Activated naive CD4-positive, alpha-beta T cell treated with anti-CD3 and anti-CD28 coated beads, Interleukin-2, amount 10 ng/mL, durations not matched to agents 7 days and 5 days (primary cell): ENCODE measurements at regions of chr18 and their contacts with region 1.

Region 1: GRCh38 chr18:46173393-46174341 is 69.5 kb downstream of the HAUS1 start:
- DNase-seq: peak; percentile 96
- H3K4me3 Mint-ChIP-seq: peak overlapping the region; percentile 99
- H3K27ac Mint-ChIP-seq: peak overlapping the region; percentile 100
- H3K4me1 Mint-ChIP-seq: peaks cover 71% of the 10 kb centered on the region
- H3K27me3 Mint-ChIP-seq: peaks cover 8% of the 10 kb centered on the region

Region 2: DNA sequence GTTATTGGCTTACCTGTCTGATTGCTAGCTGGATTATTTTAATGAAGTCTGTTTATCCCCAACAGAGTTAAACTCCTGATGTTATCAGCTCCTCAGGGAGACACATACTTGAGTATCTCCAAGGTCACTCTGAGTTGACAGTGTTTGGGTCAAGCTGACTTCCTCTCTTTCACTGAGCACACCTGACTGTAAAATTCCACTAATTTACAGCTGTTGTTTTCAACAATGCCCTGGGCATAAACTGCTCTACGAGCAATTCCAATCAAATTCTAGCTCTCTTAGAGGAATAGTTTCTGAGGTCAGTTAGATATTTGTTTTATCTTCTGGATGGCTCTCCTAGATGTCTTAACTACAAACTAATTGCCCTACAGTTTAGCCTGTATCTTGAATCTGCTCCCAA is 59.9 kb before region 1 on chr18:
- CTCF ChIA-PET with region 1: no interaction called
- DNase-seq: no peak
- H3K4me3 Mint-ChIP-seq: no peak overlapping the region
- H3K27ac Mint-ChIP-seq: no peak overlapping the region
- H3K4me1 Mint-ChIP-seq: peaks cover 10% of the 10 kb centered on the region
- H3K27me3 Mint-ChIP-seq: no peaks in the 10 kb centered on the region

Region 3: DNA sequence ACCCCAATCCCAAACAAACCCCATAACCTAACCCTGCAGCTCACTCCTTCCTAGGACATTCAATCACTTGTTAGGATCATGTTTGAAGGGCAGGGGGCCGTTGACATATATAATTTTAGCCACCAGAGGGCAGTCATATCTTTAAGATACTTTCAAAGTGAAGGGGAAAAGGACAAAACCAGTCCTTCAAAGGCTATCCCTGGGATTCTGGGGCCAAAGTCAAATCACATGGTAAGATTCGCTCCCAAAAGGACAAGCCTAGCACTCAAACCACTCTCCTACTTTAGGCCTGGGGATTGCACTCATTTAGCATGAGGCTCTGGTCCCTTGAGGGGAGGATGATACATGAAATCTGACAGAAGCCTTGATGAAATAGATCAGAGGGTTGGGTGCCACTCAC is 24.9 kb before region 1 on chr18:
- CTCF ChIA-PET with region 1: interaction called, 96 read pairs
- DNase-seq: peak; percentile 69
- H3K4me3 Mint-ChIP-seq: no peak overlapping the region
- H3K27ac Mint-ChIP-seq: peak overlapping the region; percentile 75
- H3K4me1 Mint-ChIP-seq: peaks cover 50% of the 10 kb centered on the region
- H3K27me3 Mint-ChIP-seq: no peaks in the 10 kb centered on the region

Region 4: GRCh38 chr18:46199515-46200147 is 26.0 kb after region 1 on chr18:
- CTCF ChIA-PET with region 1: interaction called, 10 read pairs
- DNase-seq: no peak
- H3K4me3 Mint-ChIP-seq: no peak overlapping the region
- H3K27ac Mint-ChIP-seq: peak overlapping the region; percentile 63
- H3K4me1 Mint-ChIP-seq: peaks cover 66% of the 10 kb centered on the region
- H3K27me3 Mint-ChIP-seq: no peaks in the 10 kb centered on the region

Region 5: DNA sequence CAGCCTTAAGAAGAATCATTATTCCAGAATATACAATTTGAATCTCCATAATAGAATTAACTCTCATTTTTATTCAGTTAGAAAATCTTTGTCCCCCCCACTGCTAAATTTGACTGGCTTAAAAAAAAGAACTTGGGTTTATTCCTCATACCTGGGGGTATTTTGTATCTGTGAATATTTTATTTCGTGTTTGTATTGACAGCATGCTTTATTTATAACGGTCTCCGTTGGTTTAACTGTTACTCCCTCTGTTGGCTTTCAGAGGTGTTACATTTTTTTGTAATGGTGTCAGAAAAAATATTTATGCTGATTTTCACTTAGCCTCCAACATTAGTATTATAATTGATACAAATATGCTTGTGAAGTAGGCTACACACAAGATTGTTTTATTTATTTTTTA is 39.6 kb after region 1 on chr18:
- CTCF ChIA-PET with region 1: interaction called, 38 read pairs
- DNase-seq: no peak
- H3K4me3 Mint-ChIP-seq: no peak overlapping the region
- H3K27ac Mint-ChIP-seq: peak overlapping the region; percentile 70
- H3K4me1 Mint-ChIP-seq: peaks cover 79% of the 10 kb centered on the region
- H3K27me3 Mint-ChIP-seq: no peaks in the 10 kb centered on the region

Region 6: DNA sequence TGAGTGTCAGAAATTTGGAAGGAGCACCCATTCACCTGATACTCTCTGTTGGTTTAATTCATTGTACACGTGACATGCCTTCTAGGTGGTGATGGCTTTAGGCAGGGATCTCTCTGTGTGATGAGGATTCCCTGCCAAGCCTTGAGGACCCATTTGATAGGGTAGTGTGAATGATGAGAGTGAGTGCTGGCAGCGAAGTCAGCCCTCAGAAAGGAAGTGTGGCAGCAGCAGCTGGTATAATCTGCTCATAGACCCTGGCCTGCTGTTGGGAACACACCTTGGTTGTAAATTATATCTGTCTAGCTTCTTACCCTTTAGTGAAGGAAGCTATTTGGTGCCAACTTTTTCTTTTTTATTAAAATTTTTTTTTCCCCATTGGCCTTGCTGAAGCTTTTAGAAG is 95.0 kb after region 1 on chr18:
- CTCF ChIA-PET with region 1: interaction called, 10 read pairs
- DNase-seq: no peak
- H3K4me3 Mint-ChIP-seq: no peak overlapping the region
- H3K27ac Mint-ChIP-seq: no peak overlapping the region
- H3K4me1 Mint-ChIP-seq: peaks cover 29% of the 10 kb centered on the region
- H3K27me3 Mint-ChIP-seq: no peaks in the 10 kb centered on the region

Region 7: DNA sequence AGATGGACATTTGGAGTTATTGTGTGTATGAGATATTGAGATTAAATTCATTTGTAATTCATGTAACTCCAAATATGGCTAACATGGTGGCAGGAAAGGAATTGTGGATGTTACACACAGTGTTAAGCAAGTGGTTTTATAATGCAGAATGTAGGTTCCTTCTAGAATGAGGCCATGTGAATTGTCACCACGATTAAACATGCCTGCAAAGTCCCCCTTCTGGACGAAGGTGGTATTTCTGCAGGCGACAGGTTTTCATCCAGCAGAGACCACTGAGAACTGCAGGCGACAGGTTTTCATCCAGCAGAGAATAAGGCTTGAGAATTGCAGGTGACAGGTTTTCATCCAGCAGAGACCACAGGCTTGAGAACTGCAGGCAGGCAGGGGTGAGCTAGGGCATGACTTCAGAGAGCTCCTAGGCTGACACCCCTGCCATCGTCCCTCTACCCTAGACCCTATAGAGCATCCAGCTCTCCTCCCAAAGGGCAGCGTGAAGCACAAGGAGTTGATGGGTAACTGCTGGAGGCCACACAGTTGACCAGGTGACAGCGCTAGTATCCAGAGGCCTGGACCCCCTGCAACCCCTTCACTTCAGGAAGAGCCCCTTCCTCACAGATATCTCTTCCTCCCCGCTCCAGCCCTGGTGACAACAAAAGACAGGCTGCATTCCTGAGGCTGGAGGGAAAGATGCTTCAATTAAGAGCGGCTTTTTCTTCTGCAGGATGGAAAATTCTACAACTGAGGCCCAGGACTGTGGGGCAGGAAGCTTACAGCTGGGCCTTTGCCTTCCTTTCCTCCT is 307.6 kb after region 1 on chr18:
- CTCF ChIA-PET with region 1: interaction called, 11 read pairs
- DNase-seq: peak; percentile 74
- H3K4me3 Mint-ChIP-seq: no peak overlapping the region
- H3K27ac Mint-ChIP-seq: no peak overlapping the region
- H3K4me1 Mint-ChIP-seq: no peaks in the 10 kb centered on the region
- H3K27me3 Mint-ChIP-seq: peaks cover 14% of the 10 kb centered on the region